Thyroid gland (tissue), 4 donors: ENCODE measurements at regions of chr3 and their contacts with region 1.

Region 1: GRCh38 chr3:124686028-124686680 is 44.1 kb upstream of the UMPS start:
- DNase-seq: no peak
- H3K4me3 ChIP-seq: no peak overlapping the region
- H3K27ac ChIP-seq: no peak overlapping the region
- H3K4me1 ChIP-seq: no peaks in the 10 kb centered on the region
- H3K27me3 ChIP-seq: no peaks in the 10 kb centered on the region
- CTCF ChIP-seq: no peak
- POLR2A ChIP-seq: no peak

Region 2: GRCh38 chr3:124567179-124567578 is 119.0 kb before region 1 on chr3:
- intact Hi-C with region 1: loop called (anchors 2 kb)
- DNase-seq: no peak
- H3K4me3 ChIP-seq: no peak overlapping the region
- H3K27ac ChIP-seq: no peak overlapping the region
- H3K4me1 ChIP-seq: peaks cover 11 to 16% of the 10 kb centered on the region in 2 donors
- H3K27me3 ChIP-seq: no peaks in the 10 kb centered on the region
- CTCF ChIP-seq: no peak
- POLR2A ChIP-seq: no peak